Mammary epithelial cell (primary cell): ENCODE measurements at regions of chr6 and their contacts with region 1.

Region 1: GRCh38 chr6:148746363-148747144 is at the start of gene UST:
- DNase-seq: peak; percentile 88
- H3K4me3 ChIP-seq: peak within 1 kb of the TSS; percentile 60 to 93 (median 74)
- H3K27ac ChIP-seq: peak within 1 kb of the TSS; percentile 20
- H3K4me1 ChIP-seq: peaks cover 16% of the 10 kb centered on the region
- H3K27me3 ChIP-seq: no peaks in the 10 kb centered on the region
- CTCF ChIP-seq: peak; percentile 46 to 66
- total RNA-seq, gene UST: 13.0 to 22.2 TPM

Region 2: DNA sequence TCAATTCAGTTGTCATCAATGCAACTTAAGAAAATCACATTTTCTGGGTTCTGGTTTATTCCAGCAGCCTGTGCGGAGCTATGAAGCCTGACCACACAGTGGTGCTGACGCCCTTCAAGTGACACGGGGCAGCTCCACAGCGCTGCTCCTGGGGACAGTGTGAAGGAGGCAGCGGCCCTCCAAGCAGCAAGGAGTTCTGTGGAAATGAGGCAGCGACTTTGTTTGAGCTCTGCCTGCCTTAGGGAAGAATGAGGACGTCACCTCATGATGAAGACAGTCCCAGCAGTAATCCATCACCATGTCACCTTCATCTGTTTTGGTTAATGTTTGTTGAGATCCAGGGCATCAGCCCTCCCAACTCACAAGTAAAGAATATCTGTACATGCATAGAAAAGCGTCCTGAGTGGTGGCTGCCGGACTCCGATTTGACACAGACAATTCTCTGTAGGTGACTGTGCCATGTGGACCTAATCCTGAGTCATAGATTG is 168.3 kb before region 1 on chr6:
- CTCF ChIA-PET with region 1: interaction called, 9 read pairs
- dilution Hi-C with region 1: no loop called
- in situ Hi-C with region 1: no loop called
- intact Hi-C with region 1: loop called (anchors 2 kb)
- DNase-seq: peak; percentile 53
- H3K4me3 ChIP-seq: no peak overlapping the region
- H3K27ac ChIP-seq: no peak overlapping the region
- H3K4me1 ChIP-seq: no peaks in the 10 kb centered on the region
- H3K27me3 ChIP-seq: no peaks in the 10 kb centered on the region
- CTCF ChIP-seq: peak; percentile 64 to 95

Region 3: DNA sequence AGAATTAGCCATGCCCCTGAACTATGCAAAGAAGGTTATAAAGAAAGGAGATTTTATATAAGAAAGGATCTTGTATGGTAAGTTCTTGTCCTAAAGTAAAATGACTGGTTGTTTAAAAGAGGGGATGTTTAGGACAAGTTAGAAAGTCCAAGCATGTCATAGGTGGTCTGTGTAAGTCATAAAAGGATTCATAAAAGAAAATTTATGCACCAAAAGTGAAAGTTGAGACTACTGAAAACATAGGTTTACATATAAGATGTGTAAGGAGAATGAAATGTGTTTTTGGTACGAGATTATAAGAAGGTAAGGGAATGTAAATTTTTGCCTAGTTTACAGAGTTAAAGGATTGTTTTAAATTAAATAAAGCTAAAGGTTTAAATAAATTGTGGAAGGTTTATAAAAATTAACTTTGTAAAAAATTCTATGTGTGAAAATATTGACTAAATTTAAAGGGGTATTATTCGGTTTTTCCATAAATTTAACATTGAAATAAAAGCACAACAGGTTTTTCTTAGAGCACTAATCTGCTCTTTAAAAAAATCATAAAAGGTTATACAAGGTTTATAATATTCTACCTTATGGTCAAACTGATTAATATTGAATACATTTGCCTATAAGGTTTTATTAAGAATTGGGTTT is 93.3 kb before region 1 on chr6:
- CTCF ChIA-PET with region 1: no interaction called
- dilution Hi-C with region 1: no loop called
- in situ Hi-C with region 1: no loop called
- intact Hi-C with region 1: no loop called
- DNase-seq: no peak
- H3K4me3 ChIP-seq: no peak overlapping the region
- H3K27ac ChIP-seq: no peak overlapping the region
- H3K4me1 ChIP-seq: no peaks in the 10 kb centered on the region
- H3K27me3 ChIP-seq: peaks cover 2% of the 10 kb centered on the region
- CTCF ChIP-seq: no peak

Region 4: GRCh38 chr6:148831064-148831463 is 84.5 kb after region 1 on chr6:
- CTCF ChIA-PET with region 1: no interaction called
- dilution Hi-C with region 1: no loop called
- in situ Hi-C with region 1: no loop called
- intact Hi-C with region 1: loop called (anchors 5 kb)
- DNase-seq: peak; percentile 22
- H3K4me3 ChIP-seq: no peak overlapping the region
- H3K27ac ChIP-seq: no peak overlapping the region
- H3K4me1 ChIP-seq: peaks cover 25% of the 10 kb centered on the region
- H3K27me3 ChIP-seq: no peaks in the 10 kb centered on the region
- CTCF ChIP-seq: no peak

Region 5: DNA sequence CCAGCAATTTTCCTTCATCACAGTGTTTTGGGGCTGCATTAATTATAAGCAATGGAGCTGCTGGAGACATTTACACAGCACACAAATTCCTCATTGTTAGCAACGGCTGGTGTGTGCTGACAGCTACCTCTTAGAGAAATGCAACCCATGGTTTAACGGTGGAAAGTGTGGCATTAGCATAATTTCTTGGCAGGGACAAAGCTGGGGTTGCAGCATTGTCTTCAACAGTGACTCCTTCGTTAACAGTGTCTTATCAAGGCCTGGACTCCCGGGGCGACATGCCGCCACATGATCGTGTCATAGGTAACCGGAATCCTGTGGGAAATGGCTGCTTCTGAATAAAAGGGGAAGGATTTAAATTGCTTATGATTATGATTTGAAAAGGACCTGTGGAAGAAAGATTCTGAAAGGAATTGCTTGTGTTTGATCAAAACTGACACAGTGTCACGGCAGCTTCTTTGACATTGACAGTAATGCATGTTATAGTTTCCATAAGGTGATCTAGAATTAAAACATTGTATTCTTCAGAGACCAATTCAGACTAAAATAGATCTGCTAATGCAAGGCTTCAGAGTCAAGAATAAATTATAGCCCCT is 128.2 kb after region 1 on chr6:
- CTCF ChIA-PET with region 1: no interaction called
- dilution Hi-C with region 1: no loop called
- in situ Hi-C with region 1: no loop called
- intact Hi-C with region 1: loop called (anchors 2 kb)
- DNase-seq: peak; percentile 82
- H3K4me3 ChIP-seq: no peak overlapping the region
- H3K27ac ChIP-seq: peak overlapping the region; percentile 9
- H3K4me1 ChIP-seq: peaks cover 32% of the 10 kb centered on the region
- H3K27me3 ChIP-seq: no peaks in the 10 kb centered on the region
- CTCF ChIP-seq: no peak

Region 6: DNA sequence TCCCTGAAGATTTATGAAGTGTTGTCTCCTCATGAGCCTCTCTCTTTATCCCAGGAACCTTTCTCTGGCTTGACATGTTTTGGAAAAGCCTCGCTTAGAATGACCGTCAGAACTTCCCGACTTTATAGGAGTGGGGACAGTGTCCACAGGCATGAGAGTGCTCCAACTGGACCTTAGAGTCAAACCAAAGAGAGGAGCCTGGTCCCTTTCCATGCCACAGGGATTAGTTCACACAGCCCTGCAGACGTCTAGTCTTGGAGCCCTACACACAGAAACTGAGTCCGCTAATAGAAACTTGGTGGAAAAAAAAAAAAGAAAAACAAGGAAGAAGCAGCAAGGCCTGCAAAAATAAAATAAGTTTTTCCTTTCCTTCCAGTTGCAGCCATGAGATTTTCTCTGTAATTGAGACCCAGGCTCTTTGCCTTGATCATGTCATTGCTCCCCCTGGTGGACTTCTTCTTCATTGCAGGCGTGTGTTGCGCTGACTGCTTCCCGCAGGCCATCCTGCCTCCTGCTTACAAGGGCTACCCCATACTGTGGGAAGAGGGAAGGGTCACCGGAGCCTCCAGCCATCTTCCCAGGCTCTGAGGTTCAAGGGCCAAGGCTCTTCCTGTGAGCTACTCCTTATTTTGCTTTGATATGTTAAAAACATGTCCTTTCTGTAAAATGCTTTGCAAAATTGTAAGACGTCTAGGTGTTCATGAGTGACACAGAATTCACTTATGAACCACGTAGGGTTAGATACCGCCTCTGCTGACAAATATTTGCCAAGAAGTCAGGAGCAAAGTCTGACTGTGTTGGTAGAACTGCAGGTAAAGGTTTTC is 201.3 kb after region 1 on chr6:
- CTCF ChIA-PET with region 1: no interaction called
- dilution Hi-C with region 1: no loop called
- in situ Hi-C with region 1: loop called (anchors 5 kb)
- intact Hi-C with region 1: loop called (anchors 1 kb)
- DNase-seq: peak; percentile 62
- H3K4me3 ChIP-seq: no peak overlapping the region
- H3K27ac ChIP-seq: no peak overlapping the region
- H3K4me1 ChIP-seq: peaks cover 9% of the 10 kb centered on the region
- H3K27me3 ChIP-seq: no peaks in the 10 kb centered on the region
- CTCF ChIP-seq: peak; percentile 86 to 88

Region 7: DNA sequence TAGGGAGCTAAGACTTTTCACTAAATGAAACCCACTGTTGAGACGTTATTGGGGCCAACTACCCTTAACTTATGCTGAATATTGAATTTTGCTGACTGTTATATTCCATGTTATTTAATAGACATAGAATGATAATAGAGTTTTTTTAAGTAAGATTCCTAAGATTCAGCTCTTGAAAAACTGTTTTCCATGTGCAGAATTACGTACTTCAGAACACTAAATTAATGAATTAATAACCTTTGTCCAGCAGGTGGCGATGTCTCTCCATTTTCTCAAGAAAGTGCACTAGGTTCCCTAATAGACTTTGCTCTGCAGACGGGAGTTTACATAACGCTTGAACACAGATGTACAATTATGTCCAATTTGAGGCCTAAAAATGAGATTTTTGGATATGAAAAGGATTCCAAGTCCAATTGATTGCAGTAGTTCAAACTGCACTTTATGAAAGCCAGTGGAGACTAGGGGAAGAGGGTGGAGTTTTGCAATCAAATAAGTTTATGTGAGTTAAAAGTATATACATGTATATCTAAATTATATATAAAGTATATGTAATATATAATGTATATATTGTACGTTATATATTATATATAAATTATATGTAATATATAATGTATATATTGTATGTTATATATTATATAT is 282.3 kb after region 1 on chr6:
- CTCF ChIA-PET with region 1: no interaction called
- dilution Hi-C with region 1: no loop called
- in situ Hi-C with region 1: no loop called
- intact Hi-C with region 1: loop called (anchors 1 kb)
- DNase-seq: peak; percentile 61
- H3K4me3 ChIP-seq: no peak overlapping the region
- H3K27ac ChIP-seq: no peak overlapping the region
- H3K4me1 ChIP-seq: peaks cover 9% of the 10 kb centered on the region
- H3K27me3 ChIP-seq: no peaks in the 10 kb centered on the region
- CTCF ChIP-seq: peak; percentile 52 to 69

Region 8: GRCh38 chr6:149431905-149432775 is 685.6 kb after region 1 on chr6:
- CTCF ChIA-PET with region 1: no interaction called
- dilution Hi-C with region 1: no loop called
- in situ Hi-C with region 1: no loop called
- intact Hi-C with region 1: loop called (anchors 1 kb)
- DNase-seq: peak; percentile 65
- H3K4me3 ChIP-seq: peak overlapping the region in 1 of 3 experiments; percentile 17
- H3K27ac ChIP-seq: no peak overlapping the region
- H3K4me1 ChIP-seq: no peaks in the 10 kb centered on the region
- H3K27me3 ChIP-seq: no peaks in the 10 kb centered on the region
- CTCF ChIP-seq: peak; percentile 82 to 89